ENCODE measurements at regions of chr17 and their contacts with region 1.

Region 1: GRCh38 chr17:56779898-56780733 is 53.6 kb downstream of the C17orf67 start:
- DNase-seq: peak; percentile 88
- CTCF ChIP-seq: peak; percentile 97

Region 2: GRCh38 chr17:56592487-56593085 is 187.5 kb before region 1 on chr17:
- CTCF ChIA-PET with region 1: interaction called, 27 read pairs
- POLR2A ChIA-PET with region 1: no interaction called
- DNase-seq: peak; percentile 86
- CTCF ChIP-seq: peak; percentile 94

Region 3: DNA sequence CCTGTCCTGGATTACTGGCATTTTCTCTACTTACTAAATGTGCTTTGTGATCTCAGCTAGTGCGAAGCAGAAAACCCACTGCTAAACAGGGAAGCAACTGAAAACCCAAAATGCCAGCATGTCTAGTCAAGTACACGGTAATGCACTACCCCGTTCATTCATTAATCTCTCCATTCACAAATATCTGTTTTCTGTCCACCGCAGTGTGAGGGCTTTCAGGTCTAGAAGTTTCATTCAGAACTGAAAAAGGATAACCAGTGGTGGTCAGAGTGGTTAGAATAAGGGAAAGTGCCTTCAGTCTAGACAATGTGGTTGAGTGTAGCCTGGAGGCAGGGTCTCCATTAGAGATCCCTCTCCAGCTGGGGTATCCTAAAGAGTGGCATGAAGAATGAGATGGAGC is 14.7 kb before region 1 on chr17:
- CTCF ChIA-PET with region 1: interaction called, 28 read pairs
- POLR2A ChIA-PET with region 1: no interaction called
- DNase-seq: no peak
- CTCF ChIP-seq: no peak

Region 4: DNA sequence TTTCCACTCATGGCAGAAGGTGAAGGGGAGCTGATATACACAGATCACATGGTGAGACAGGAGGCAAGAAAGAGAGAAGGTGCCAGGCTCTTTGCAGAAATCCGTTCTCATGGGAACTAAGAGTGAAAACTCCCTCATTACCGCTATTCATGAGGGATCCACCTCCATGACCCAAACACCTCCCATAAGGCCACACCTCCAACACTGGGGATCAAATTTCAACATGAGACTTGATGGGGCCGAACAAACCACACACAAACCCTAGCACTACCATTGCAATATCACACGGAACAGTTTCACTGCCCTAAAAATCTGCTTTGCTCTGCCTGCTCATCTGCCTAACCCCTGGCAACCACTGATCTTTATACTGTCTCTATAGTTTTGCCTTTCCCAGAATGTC is 18.8 kb after region 1 on chr17:
- CTCF ChIA-PET with region 1: interaction called, 13 read pairs
- POLR2A ChIA-PET with region 1: no interaction called
- DNase-seq: no peak
- CTCF ChIP-seq: no peak

Measured in GM10248 (cell line).